ENCODE measurements at regions of chr2 and their contacts with region 1.

Region 1: GRCh38 chr2:98731041-98731893 is at the start of gene MGAT4A:
- DNase-seq: peak; percentile 36 to 71
- ATAC-seq: peak; percentile 79 to 84
- H3K4me3 ChIP-seq: peak within 1 kb of the TSS; percentile 70 to 86 (median 80)
- H3K27ac ChIP-seq: peak within 1 kb of the TSS; percentile 76 to 92 (median 88)
- H3K4me1 ChIP-seq: peaks cover 18 to 23% of the 10 kb centered on the region in 2 donors
- H3K27me3 ChIP-seq: no peaks in the 10 kb centered on the region
- CTCF ChIP-seq: no peak
- POLR2A ChIP-seq: peak; percentile 74 to 79
- total RNA-seq, gene MGAT4A: 4.2 to 14.1 (median 12.2) TPM

Region 2: DNA sequence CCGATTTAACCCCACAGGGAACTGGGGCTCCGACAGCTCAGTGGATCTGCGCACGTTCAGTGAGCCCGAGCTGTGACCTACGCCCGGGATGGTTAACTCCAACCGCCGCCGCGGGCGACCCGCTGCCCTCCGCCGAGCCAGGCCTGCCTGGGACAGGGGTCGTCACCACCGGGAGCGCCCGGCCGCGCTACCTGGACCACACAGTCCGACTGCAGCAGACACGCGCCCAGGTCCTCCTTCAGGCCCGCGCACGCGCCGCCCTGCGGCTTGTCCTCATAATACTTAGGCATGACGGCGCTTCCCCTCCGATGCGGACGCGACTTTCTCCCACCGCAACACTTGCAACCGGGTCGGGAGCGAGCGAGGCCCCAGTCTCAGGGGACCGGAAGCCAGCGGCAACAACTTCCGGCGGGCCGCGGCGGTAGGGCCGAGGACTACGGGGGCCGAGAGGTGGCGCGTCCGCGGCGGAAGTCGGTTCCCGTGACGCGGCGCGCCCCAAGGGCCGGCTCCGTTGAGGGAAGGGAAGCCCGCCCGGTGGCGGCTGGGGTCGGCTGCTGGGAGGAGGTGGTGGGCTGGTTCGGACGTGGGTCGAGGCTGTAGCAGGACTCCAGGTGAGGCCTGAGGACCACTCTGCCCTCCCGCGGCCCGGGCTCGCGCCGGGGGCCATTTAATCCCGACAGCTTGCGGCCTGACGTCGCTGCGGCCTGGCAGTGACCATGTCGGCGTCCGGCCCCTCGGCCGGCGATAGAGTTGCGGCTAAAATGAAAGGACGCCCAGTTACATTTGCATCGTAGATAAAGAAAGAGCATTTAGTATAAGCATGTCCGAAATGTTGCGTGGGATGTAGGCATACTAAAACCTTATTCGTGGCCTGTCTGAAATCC is 122.9 kb before region 1 on chr2 and contains the starts of genes COA5 and UNC50:
- in situ Hi-C with region 1: no loop called
- intact Hi-C with region 1: loop called (anchors 2 kb)
- DNase-seq: peak; percentile 79 to 85
- ATAC-seq: peak; percentile 90
- H3K4me3 ChIP-seq: peak within 1 kb of the TSS; percentile 70 to 90 (median 86)
- H3K27ac ChIP-seq: peak within 1 kb of the TSS; percentile 91 to 97 (median 94)
- H3K4me1 ChIP-seq: peaks cover 53 to 59% of the 10 kb centered on the region in 2 donors
- H3K27me3 ChIP-seq: no peaks in the 10 kb centered on the region
- CTCF ChIP-seq: no peak
- POLR2A ChIP-seq: peak; percentile 79 to 89
- total RNA-seq, gene COA5: 26.1 to 45.1 (median 31.0) TPM
- total RNA-seq, gene UNC50: 30.3 to 43.1 (median 30.5) TPM

Region 3: GRCh38 chr2:98634401-98635092 is 96.7 kb before region 1 on chr2:
- in situ Hi-C with region 1: no loop called
- intact Hi-C with region 1: no loop called
- DNase-seq: no peak
- ATAC-seq: no peak
- H3K4me3 ChIP-seq: no peak overlapping the region
- H3K27ac ChIP-seq: no peak overlapping the region
- H3K4me1 ChIP-seq: no peaks in the 10 kb centered on the region
- H3K27me3 ChIP-seq: no peaks in the 10 kb centered on the region
- CTCF ChIP-seq: no peak
- POLR2A ChIP-seq: no peak